ENCODE measurements at regions of chr20 and their contacts with region 1.

Region 1: GRCh38 chr20:815914-816606 is 17.5 kb upstream of the FAM110A start:
- DNase-seq: no peak
- H3K4me3 ChIP-seq: no peak overlapping the region
- H3K27me3 ChIP-seq: no peaks in the 10 kb centered on the region
- CTCF ChIP-seq: peak; percentile 97

Region 2: GRCh38 chr20:833450-834150 is 17.5 kb after region 1 on chr20 and contains the start of gene FAM110A:
- CTCF ChIA-PET with region 1: interaction called, 10 read pairs
- POLR2A ChIA-PET with region 1: interaction called, 14 read pairs
- DNase-seq: peak; percentile 59
- H3K4me3 ChIP-seq: peak within 1 kb of the TSS; percentile 81
- H3K27me3 ChIP-seq: no peaks in the 10 kb centered on the region
- CTCF ChIP-seq: no peak
- polyA plus RNA-seq, gene FAM110A: 2.9 and 4.2 TPM in 2 replicates

Measured in BJ (cell line).